SK-N-SH (cell line): ENCODE measurements at regions of chr3 and their contacts with region 1.

Region 1: DNA sequence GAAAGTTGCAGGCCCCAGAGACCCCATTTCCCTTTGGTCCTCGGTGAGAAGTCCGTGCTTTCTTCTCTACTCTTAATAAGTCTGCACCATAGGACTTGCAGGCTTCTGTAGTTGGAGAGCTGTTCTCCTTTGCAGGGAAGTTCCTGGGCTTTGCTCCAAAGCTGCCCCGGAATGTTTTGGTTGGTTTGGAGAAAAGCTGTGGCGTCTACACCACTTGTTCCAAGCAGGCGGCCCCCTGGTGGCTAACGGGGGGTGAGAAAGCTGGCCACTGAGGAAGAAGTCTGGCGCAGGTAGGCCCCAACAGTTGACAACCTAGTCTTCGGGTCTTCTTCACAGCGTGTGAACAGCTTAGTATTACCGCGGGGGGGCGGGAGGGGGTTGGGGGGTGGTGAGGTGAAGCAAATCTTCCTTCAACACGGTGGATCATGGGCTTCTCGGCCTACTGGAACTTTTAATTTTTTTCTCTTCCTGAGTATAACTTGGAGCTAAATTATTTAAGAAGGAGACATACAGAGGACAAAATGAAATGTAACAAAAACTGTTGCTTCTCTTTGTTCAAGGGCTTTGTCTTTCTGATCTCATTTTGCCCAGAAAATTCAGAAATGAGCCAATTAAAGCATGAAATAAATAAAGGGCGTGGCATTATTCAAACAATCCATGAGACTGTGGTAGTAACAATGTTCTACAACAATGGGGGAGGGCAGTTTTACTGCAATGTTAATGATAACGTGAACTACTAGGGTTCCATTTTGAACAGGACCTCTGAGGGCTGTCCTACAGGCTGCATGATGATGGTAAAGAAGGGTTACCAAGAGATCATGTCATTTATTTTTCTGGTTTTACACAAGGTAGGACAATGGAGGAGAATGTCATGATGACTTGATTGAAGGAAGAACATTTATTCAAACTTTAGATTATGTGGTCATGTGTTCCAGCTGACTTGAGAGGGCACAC is 2.2 kb upstream of the THRB start:
- DNase-seq: peak; percentile 63
- H3K4me3 ChIP-seq: no peak overlapping the region
- H3K27ac ChIP-seq: no peak overlapping the region
- H3K4me1 ChIP-seq: peaks cover 0 to 11% of the 10 kb centered on the region in 2 experiments; a peak in 1 of 4 replicates
- H3K27me3 ChIP-seq: peaks cover 19% of the 10 kb centered on the region; the same call in 1 of the 2 replicates
- CTCF ChIP-seq: peak; percentile 49
- EP300 ChIP-seq: no peak
- RAD21 ChIP-seq: peak; percentile 30

Region 2: DNA sequence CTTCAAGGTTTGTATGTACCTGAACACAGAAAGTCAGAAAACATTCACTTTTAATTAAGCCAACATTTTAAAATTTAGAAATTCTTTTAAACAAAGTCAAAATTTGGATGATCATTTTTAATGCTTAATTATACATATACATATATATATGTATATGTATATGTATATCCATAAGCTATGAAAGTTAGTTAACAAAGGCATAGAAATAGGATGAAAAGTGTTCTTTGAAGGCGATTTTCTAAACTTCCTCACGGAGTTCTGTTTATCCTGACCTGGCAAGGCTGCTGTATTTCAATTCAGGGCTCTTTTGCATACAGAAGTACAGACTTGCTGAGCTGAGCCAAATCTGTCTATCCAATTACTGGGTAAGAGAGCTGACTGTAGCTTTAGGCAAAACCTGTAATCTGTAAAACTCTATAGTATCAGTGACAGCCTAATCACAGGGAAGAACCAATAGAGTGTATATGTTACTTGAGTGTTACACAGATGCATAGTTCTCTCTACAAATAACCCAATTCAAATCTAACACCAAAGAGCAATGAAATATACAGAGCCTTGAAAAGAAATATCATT is 29.9 kb after region 1 on chr3:
- CTCF ChIA-PET with region 1: interaction called, 10 read pairs
- POLR2A ChIA-PET with region 1: no interaction called
- DNase-seq: peak; percentile 24
- H3K4me3 ChIP-seq: no peak overlapping the region
- H3K27ac ChIP-seq: no peak overlapping the region
- H3K4me1 ChIP-seq: peaks cover 0 to 5% of the 10 kb centered on the region in 2 experiments; a peak in 2 of 4 replicates
- H3K27me3 ChIP-seq: no peaks in the 10 kb centered on the region
- CTCF ChIP-seq: no peak
- EP300 ChIP-seq: peak in 1 of 2 experiments; percentile 42; a peak in 1 of 4 replicates
- RAD21 ChIP-seq: no peak